ENCODE measurements at regions of chr10 and their contacts with region 1.

Region 1: GRCh38 chr10:70461215-70461986 is 17.2 kb upstream of the PALD1 start:
- DNase-seq: no peak
- H3K4me3 ChIP-seq: no peak overlapping the region
- H3K27ac ChIP-seq: no peak overlapping the region
- H3K4me1 ChIP-seq: peaks cover 8 to 51% (median 36%) of the 10 kb centered on the region in 6 donors
- H3K27me3 ChIP-seq: peaks cover 0 to 47% (median 19%) of the 10 kb centered on the region in 7 donors
- CTCF ChIP-seq: peak; percentile 61 to 92 (median 87)
- POLR2A ChIP-seq: no peak

Region 2: DNA sequence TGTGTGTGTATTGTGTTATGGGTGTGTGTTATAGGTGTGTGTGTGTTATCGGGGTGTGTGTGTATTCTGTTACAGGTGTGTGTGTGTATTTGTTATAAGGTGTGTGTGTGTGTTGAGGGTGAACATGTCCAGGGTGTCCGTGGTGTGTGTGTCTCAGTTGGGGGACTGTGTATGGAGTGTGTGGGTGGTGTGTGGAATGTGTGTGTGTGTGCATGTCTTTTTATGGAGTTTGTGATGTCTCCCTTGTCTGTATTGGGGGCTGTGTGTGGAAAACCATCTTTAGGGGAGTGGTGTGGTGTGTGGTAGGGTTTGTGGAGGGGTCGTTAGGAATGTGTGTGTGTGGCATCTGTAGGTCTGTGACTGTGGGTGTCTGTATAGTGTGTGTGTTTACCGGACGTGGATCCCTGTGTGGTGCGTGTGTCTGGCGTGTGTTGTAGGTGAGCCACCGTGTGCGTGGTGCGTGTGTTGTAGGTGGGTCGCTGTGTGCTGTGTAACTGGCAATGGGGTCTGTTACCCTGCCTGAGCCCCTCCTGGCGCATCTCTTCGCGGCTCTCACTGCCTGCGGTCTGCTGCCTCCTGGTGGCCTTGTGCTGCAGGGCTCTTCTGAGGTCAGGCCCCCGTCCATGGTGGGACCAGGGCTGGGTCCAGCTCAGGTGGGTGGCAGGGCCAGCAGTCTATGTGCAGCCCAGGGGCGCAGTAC is 78.8 kb after region 1 on chr10:
- intact Hi-C with region 1: loop called (anchors 5 kb)
- DNase-seq: no peak
- H3K4me3 ChIP-seq: no peak overlapping the region
- H3K27ac ChIP-seq: no peak overlapping the region
- H3K4me1 ChIP-seq: peaks cover 0 to 18% (median 7%) of the 10 kb centered on the region in 6 donors
- H3K27me3 ChIP-seq: no peaks in the 10 kb centered on the region
- CTCF ChIP-seq: peak; percentile 43 to 77 (median 64)
- POLR2A ChIP-seq: no peak

Region 3: DNA sequence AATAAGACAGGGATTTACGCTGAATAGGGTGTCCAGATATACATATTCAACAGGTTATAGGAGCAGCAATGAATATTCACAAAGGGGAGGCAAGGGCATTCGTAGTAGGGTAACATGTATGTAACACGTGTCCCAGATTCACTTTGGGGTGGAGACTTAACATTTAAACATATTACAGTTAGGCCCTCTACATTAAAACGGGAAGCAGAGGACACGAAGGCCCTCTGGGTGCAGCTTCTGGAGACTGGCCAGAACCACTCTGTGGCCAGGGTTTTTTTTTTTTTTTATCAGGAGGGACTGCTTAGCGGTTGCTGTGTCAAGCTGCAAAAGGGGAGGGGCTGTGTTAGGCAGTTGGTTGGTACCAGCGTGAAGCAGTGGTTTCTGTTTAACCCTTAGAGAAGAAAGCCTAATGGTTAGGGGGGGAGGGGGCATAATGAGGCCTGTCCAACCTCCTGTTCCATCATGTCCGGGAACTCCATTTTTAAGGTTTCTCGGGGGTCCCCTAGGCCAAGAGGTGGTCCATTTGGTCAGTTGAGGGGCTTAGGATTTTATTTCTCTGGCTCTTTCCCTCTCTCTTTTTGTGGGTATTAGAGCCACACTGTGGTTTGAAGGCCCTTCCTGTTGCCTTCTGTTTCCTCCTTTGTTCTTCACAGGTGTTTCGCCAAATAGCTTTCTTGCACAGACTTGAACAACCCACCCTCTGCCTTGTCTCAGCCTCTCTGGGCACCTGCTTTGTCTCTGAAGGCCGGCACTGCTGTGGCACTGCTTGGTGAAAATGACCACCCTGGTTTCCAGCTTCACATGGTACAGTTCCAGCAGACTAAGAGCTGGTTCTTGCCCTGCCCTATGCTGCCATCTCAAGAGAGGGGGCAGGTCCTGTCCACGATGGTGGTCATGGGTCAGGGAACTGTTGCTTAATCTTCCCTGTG is 114.7 kb after region 1 on chr10:
- intact Hi-C with region 1: no loop called
- DNase-seq: no peak
- H3K4me3 ChIP-seq: peak overlapping the region in 1 of 8 donors; percentile 37
- H3K27ac ChIP-seq: peak overlapping the region in 7 of 8 donors; percentile 48 to 80 (median 60)
- H3K4me1 ChIP-seq: peaks cover 13 to 58% (median 44%) of the 10 kb centered on the region in 6 donors
- H3K27me3 ChIP-seq: no peaks in the 10 kb centered on the region
- CTCF ChIP-seq: no peak
- POLR2A ChIP-seq: no peak

Region 4: DNA sequence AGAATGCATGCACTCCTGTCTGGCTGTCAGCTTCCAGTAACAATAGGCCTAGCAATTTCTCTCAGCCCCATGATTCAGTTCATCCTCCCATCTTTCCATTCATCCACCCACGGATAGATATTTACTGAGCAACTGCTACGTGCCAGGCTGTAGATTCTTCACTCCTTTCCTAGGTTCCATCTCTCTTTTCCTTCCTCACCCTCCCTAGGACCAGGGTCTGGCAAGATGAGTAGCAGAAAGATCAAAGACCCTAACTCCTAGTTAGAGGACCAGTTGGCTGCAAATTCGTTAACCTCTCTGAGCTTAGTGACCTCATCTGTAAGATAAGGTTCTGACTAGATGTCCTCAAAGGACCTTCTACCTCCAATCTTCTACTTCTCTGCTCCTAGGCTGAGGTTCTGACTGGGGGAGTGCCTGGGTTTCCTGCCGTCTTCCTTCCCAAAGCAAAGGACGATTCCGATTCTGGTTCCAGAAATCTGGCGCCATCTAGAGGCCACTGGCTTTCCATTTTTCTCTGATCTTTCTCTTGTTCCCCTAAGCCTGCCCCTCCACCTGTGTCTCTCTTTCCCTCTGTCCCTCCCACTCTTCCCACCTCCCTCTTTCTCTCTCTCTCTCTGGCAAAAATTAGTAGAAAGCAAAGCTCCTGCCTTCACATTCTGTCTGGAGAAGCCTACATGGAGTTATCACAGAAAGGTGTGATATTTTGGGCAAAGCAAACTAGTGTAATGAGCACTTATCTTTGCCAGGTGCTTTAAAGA is 297.5 kb after region 1 on chr10:
- intact Hi-C with region 1: loop called (anchors 5 kb)
- DNase-seq: peak; percentile 75
- H3K4me3 ChIP-seq: no peak overlapping the region
- H3K27ac ChIP-seq: no peak overlapping the region
- H3K4me1 ChIP-seq: peaks cover 0 to 8% (median 0%) of the 10 kb centered on the region in 6 donors
- H3K27me3 ChIP-seq: peaks cover 0 to 13% (median 0%) of the 10 kb centered on the region in 7 donors
- CTCF ChIP-seq: peak; percentile 36 to 82 (median 70)
- POLR2A ChIP-seq: no peak

Region 5: GRCh38 chr10:70880077-70880534 is 418.7 kb after region 1 on chr10:
- intact Hi-C with region 1: loop called (anchors 10 kb)
- DNase-seq: peak; percentile 85
- H3K4me3 ChIP-seq: no peak overlapping the region
- H3K27ac ChIP-seq: no peak overlapping the region
- H3K4me1 ChIP-seq: peaks cover 0 to 6% (median 0%) of the 10 kb centered on the region in 6 donors
- H3K27me3 ChIP-seq: no peaks in the 10 kb centered on the region
- CTCF ChIP-seq: peak; percentile 72 to 93 (median 87)
- POLR2A ChIP-seq: no peak

Measured in spleen (tissue), 13 donors.